Breast epithelium (tissue), 4 donors: ENCODE measurements at regions of chr21 and their contacts with region 1.

Region 1: GRCh38 chr21:19650074-19650473 is 1246.5 kb upstream of the TMPRSS15 start:
- DNase-seq: no peak
- H3K4me3 ChIP-seq: no peak overlapping the region
- H3K27ac ChIP-seq: no peak overlapping the region
- H3K4me1 ChIP-seq: no peaks in the 10 kb centered on the region
- H3K27me3 ChIP-seq: no peaks in the 10 kb centered on the region
- CTCF ChIP-seq: no peak
- POLR2A ChIP-seq: no peak

Region 2: GRCh38 chr21:19684328-19684727 is 34.3 kb after region 1 on chr21:
- intact Hi-C with region 1: loop called (anchors 2 kb)
- DNase-seq: no peak
- H3K4me3 ChIP-seq: no peak overlapping the region
- H3K27ac ChIP-seq: no peak overlapping the region
- H3K4me1 ChIP-seq: no peaks in the 10 kb centered on the region
- H3K27me3 ChIP-seq: no peaks in the 10 kb centered on the region
- CTCF ChIP-seq: no peak
- POLR2A ChIP-seq: no peak